Activated B cell treated with CpG ODN at 0.5 μM for 24 hours (primary cell): ENCODE measurements at regions of chr20 and their contacts with region 1.

Region 1: DNA sequence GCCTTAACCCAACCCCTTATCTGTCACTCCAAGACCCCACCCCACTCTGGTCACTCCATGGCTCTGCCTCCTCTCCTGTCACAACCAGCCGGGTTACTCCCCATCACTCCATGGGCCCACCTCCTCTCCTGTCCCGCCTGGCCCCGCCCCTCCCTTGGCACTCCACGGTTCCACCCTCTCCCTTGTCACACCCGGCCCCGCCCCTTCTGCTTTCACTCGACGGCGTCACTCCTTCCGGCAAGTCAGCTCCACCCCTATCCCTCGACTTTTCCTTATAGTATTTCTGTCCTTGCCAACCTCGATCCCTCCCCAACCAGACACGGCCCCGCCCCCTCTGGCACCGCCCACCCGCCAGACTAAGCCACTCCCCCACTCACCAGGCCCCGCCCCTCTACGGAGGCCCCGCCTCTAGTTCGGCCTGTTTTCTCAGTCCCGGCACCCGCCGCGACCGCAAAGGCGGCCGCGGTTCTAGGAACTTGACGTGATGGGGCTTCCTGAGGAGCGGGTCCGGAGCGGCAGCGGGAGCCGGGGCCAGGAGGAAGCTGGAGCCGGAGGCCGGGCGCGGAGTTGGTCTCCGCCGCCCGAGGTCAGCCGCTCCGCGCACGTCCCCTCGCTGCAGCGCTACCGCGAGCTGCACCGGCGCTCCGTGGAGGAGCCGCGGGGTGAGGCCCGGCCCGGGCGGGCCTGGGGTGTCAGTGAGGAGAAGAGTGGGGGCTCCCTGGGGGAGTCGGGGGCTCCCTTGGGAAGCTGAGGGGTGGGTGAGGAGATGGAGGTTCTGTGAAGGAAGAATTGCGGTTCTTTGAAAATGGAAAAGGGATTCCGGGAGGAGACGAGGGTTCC is at the start of gene ACSS2:
- DNase-seq: peak; percentile 96
- ATAC-seq: peak; percentile 86
- H3K4me3 Mint-ChIP-seq: peak within 1 kb of the TSS; percentile 86
- H3K27ac Mint-ChIP-seq: peak within 1 kb of the TSS; percentile 25
- H3K4me1 Mint-ChIP-seq: peaks cover 51% of the 10 kb centered on the region
- H3K27me3 Mint-ChIP-seq: no peaks in the 10 kb centered on the region
- CTCF ChIP-seq: no peak
- total RNA-seq, gene ACSS2: 8.4 and 11.3 TPM in 2 replicates

Region 2: DNA sequence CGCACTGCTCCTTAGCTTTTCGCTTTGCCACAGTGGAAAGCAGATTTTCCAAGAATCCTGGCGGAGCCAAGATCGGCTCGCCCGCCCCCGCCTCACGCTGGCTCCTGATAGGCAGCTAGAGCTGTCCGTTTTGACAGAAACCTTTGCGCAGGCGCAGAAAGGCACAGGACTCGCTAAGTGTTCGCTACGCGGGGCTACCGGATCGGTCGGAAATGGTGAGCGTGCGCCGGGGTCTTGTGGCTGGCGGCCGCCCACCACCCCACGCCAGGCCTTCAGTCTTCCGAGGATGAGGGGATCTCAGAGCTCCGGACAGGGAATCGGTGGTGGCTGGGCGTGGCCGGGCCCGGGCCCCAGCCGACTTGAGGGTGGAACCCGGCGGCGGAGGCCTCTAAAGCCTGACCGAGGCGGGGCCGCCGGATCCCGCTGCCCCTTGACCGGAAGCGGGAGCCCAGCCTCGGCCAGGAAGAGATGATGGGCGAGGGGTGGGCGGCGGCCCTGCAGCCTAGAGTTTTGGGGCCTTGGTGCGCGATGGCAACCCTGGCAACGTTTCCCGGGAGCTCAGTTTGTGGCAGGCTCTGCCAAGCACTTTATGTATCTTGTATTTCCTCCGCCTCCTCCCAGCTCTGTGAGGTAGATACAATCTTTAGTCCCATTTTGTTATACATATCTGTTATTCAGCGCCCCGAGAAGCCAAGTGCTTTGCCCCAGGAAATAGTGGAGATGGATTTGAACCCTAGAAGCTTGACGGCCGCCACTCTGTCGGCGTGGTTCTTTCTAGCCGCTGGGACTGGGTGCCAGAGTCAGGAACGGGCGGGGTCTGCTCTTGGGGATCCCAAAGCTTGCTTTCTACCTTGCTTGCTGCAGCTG is 359.9 kb before region 1 on chr20 and contains the start of gene DYNLRB1:
- CTCF ChIA-PET with region 1: no interaction called
- POLR2A ChIA-PET with region 1: no interaction called
- intact Hi-C with region 1: loop called (anchors 1 kb)
- DNase-seq: peak; percentile 88
- ATAC-seq: peak; percentile 82
- H3K4me3 Mint-ChIP-seq: peak within 1 kb of the TSS; percentile 98
- H3K27ac Mint-ChIP-seq: peak within 1 kb of the TSS; percentile 96
- H3K4me1 Mint-ChIP-seq: peaks cover 48% of the 10 kb centered on the region
- H3K27me3 Mint-ChIP-seq: no peaks in the 10 kb centered on the region
- CTCF ChIP-seq: no peak
- total RNA-seq, gene DYNLRB1: 62.7 and 65.9 TPM in 2 replicates

Region 3: DNA sequence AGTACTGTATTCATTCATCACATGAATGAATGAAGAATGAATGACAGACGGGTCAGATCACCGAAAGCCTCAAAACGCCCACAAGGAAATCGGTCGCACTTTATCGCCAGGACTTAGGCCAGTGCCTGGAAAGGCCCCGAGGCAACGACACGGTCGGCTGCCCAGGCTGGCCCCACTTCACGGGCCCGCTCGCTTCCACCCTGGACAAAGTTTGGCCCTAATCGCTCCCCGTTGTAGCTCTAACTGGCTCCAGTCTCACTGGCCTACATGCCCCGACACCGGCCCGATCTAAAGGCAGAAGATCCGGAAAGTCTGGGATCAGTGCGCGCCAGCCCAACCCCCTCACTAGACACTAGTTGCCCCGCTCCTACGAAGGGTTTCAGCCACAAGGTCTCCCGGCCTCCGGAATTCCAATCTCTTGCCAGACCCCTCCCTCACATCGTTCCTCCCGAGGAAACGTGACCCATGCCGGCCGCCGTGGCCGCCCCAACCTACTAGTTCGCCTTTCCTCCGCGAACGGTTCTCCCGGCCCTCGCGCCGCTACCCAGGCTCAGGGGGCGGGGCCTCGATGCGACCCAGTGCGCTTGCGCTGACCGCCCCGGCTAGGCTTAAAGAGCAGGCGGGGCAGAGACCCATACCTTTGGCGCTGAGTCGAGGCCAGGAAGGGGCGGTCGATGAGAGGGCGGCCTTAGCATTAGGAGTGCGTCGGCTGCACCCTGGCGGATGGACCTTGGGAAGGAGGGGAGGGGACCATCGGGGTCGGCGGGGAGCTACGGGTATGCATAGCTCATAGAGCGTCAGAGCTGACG is 79.1 kb after region 1 on chr20 and contains the starts of genes GSS and MYH7B:
- CTCF ChIA-PET with region 1: interaction called, 8 read pairs
- POLR2A ChIA-PET with region 1: interaction called, 16 read pairs
- intact Hi-C with region 1: loop called (anchors 1 kb)
- DNase-seq: peak; percentile 98
- ATAC-seq: peak; percentile 95
- H3K4me3 Mint-ChIP-seq: peak within 1 kb of the TSS; percentile 97
- H3K27ac Mint-ChIP-seq: peak within 1 kb of the TSS; percentile 83
- H3K4me1 Mint-ChIP-seq: peaks cover 26% of the 10 kb centered on the region
- H3K27me3 Mint-ChIP-seq: no peaks in the 10 kb centered on the region
- CTCF ChIP-seq: no peak
- total RNA-seq, gene GSS: 26.1 and 27.5 TPM in 2 replicates
- total RNA-seq, gene MYH7B: 0.20 and 0.35 TPM in 2 replicates

Region 4: GRCh38 chr20:35092524-35093266 is 216.3 kb after region 1 on chr20 and contains the start of gene TRPC4AP:
- CTCF ChIA-PET with region 1: interaction called, 4 read pairs
- POLR2A ChIA-PET with region 1: interaction called, 3 read pairs
- intact Hi-C with region 1: loop called (anchors 1 kb)
- DNase-seq: peak; percentile 87
- ATAC-seq: peak; percentile 97
- H3K4me3 Mint-ChIP-seq: peak within 1 kb of the TSS; percentile 95
- H3K27ac Mint-ChIP-seq: peak within 1 kb of the TSS; percentile 91
- H3K4me1 Mint-ChIP-seq: peaks cover 49% of the 10 kb centered on the region
- H3K27me3 Mint-ChIP-seq: no peaks in the 10 kb centered on the region
- CTCF ChIP-seq: peak; percentile 34
- total RNA-seq, gene TRPC4AP: 58.3 and 60.2 TPM in 2 replicates

Region 5: DNA sequence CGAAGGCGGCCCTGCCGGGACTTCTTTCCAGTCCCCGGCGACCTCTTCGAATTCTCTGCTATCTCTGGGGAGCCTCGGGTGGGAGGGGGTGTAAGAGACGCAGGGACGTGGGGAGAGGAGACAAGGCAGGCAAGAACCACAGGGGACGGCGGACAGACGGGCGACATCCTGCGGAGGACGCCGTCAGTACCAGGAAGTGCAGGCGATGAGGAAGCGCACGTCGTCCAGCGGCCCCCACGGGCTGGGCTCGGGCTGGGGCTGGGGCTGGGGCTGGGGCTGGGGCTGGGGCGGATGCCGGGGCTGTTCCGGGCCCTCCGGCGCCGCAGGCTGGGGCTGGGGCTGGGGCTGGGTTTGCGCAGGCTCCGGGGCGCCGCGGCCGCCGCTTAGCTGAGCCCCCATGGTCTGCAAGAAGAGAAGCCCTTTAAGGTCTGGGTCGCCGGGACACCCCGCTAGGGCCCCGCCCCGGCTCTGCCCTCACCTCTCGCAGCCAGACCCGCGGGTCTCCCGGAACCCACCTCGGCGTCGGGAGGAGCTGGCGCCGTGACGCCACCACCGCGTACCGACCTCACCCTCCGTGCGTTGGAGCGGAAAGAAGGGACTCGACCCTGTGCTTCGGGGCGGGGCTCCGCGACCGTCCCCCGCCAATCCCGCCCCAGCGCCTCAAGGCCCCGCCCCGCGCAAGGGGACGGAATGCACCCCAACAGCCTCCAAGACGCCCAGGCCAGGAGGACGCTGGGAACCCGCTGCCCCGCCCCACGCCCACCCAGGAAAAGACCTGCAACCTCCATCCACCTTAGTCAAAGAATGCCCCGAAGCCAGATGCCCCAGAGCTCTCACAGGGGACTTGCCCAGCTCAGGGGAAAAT is 401.4 kb after region 1 on chr20 and contains the start of gene MMP24OS:
- CTCF ChIA-PET with region 1: no interaction called
- POLR2A ChIA-PET with region 1: no interaction called
- intact Hi-C with region 1: loop called (anchors 1 kb)
- DNase-seq: peak; percentile 85
- ATAC-seq: peak; percentile 90
- H3K4me3 Mint-ChIP-seq: peak within 1 kb of the TSS; percentile 97
- H3K27ac Mint-ChIP-seq: peak within 1 kb of the TSS; percentile 99
- H3K4me1 Mint-ChIP-seq: peaks cover 31% of the 10 kb centered on the region
- H3K27me3 Mint-ChIP-seq: no peaks in the 10 kb centered on the region
- CTCF ChIP-seq: no peak
- total RNA-seq, gene MMP24OS: 39.2 and 47.9 TPM in 2 replicates